Dendritic cell treated with granulocyte-macrophage colony-stimulating factor and Interleukin-4, amounts not matched to agents 40 ng/mL and 50 ng/mL, for 4 days (primary cell): ENCODE measurements at regions of chr12 and their contacts with region 1.

Region 1: GRCh38 chr12:62731055-62731820 is 203.7 kb downstream of the PPM1H start:
- H3K4me3 Mint-ChIP-seq: peak overlapping the region; percentile 13
- H3K27ac Mint-ChIP-seq: peak overlapping the region; percentile 56
- H3K4me1 Mint-ChIP-seq: peaks cover 48% of the 10 kb centered on the region
- H3K27me3 Mint-ChIP-seq: no peaks in the 10 kb centered on the region

Region 2: GRCh38 chr12:62774794-62775193 is 43.6 kb after region 1 on chr12:
- intact Hi-C with region 1: loop called (anchors 2 kb)
- H3K4me3 Mint-ChIP-seq: no peak overlapping the region
- H3K27ac Mint-ChIP-seq: no peak overlapping the region
- H3K4me1 Mint-ChIP-seq: peaks cover 6% of the 10 kb centered on the region
- H3K27me3 Mint-ChIP-seq: peaks cover 4% of the 10 kb centered on the region

Region 3: DNA sequence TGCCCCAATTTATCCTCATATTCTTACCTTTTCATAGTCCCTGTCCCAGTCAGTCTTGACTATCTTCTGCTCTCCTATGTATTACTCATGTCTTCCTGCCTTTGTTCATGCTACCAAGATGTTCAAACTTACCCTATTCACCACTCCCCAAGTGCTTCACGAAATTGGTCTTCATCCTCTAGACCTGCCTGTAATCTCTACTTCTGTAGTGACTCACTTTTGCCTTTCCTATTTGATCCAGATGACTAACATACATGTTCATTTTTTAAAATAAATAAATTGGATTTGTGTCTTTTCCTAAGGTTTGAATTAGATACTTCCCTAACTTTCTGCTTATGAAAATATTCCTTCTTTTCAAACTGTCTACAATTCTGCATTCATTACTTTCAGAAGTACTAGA is 311.4 kb after region 1 on chr12:
- intact Hi-C with region 1: no loop called
- H3K4me3 Mint-ChIP-seq: no peak overlapping the region
- H3K27ac Mint-ChIP-seq: no peak overlapping the region
- H3K4me1 Mint-ChIP-seq: no peaks in the 10 kb centered on the region
- H3K27me3 Mint-ChIP-seq: no peaks in the 10 kb centered on the region